ENCODE measurements at regions of chr17 and their contacts with region 1.

Region 1: DNA sequence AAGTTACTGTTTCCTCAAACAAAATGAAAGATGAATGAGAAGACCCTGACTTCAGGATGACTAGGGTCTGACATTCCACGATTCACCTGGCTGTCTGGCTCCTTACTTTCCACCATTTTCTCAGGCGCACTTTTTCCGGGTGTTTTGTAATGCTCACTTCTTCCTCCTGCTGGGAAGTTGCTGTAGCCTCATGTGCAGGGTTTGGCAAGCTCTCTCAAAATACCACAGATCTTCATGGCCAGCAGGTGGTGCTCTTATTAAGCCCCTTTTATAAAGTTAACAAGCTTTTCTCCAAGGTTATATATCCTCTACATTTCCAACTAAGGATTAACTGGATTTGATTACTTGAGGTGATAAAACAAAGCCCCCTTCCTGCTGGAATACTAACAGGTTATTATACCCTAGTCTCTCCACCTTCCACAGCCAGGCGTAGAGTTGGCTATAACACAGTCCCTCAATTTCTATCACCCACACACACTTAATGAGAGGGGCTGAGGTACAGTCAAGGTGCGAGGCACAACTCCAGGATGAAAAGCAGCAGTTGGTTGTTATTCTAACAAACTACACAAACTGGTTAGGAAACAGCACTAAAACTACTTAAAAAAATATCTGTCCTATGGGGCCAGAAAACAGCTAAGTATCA is 45.4 kb downstream of the STH start:
- DNase-seq: peak; percentile 54
- H3K4me3 ChIP-seq: no peak overlapping the region
- H3K27me3 ChIP-seq: no peaks in the 10 kb centered on the region
- CTCF ChIP-seq: peak; percentile 87

Region 2: GRCh38 chr17:46013502-46014165 is 30.8 kb before region 1 on chr17:
- CTCF ChIA-PET with region 1: interaction called, 20 read pairs
- POLR2A ChIA-PET with region 1: no interaction called
- DNase-seq: peak; percentile 68
- H3K4me3 ChIP-seq: no peak overlapping the region
- H3K27me3 ChIP-seq: no peaks in the 10 kb centered on the region
- CTCF ChIP-seq: no peak

Region 3: GRCh38 chr17:46056800-46057304 is 12.4 kb after region 1 on chr17:
- CTCF ChIA-PET with region 1: interaction called, 12 read pairs
- POLR2A ChIA-PET with region 1: no interaction called
- DNase-seq: peak; percentile 74
- H3K4me3 ChIP-seq: no peak overlapping the region
- H3K27me3 ChIP-seq: no peaks in the 10 kb centered on the region
- CTCF ChIP-seq: no peak

Region 4: GRCh38 chr17:46199379-46199778 is 155.0 kb after region 1 on chr17:
- CTCF ChIA-PET with region 1: interaction called, 30 read pairs
- POLR2A ChIA-PET with region 1: no interaction called
- DNase-seq: no peak
- H3K4me3 ChIP-seq: no peak overlapping the region
- H3K27me3 ChIP-seq: no peaks in the 10 kb centered on the region
- CTCF ChIP-seq: no peak